ENCODE measurements at regions of chr3 and their contacts with region 1.

Region 1: DNA sequence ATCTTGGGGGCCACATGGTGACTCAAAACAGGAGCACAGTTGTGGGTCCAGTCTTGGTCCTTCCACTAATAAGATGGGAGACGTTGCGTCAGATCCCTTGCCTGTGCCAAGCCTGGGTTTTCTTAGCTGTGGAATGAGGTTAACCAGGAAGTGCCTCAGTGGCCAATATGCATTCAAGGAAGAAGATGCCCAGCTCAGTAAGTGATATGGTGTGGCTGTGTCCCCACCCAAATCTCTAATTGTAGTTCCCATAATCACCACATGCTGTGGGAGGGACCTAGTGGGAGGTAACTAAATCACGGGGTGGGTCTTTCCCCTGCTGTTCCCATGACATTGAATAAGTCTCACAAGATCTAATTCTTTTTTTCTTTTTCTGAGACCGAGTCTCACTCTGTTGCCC is 6.4 kb downstream of the ALG1L2 start:
- DNase-seq: no peak
- H3K4me3 Mint-ChIP-seq: no peak overlapping the region
- H3K27ac Mint-ChIP-seq: no peak overlapping the region
- H3K4me1 Mint-ChIP-seq: no peaks in the 10 kb centered on the region
- H3K27me3 Mint-ChIP-seq: no peaks in the 10 kb centered on the region
- CTCF ChIP-seq: no peak

Region 2: GRCh38 chr3:130048726-130049125 is 39.3 kb before region 1 on chr3:
- CTCF ChIA-PET with region 1: no interaction called
- intact Hi-C with region 1: loop called (anchors 1 kb)
- DNase-seq: no peak
- H3K4me3 Mint-ChIP-seq: no peak overlapping the region
- H3K27ac Mint-ChIP-seq: no peak overlapping the region
- H3K4me1 Mint-ChIP-seq: no peaks in the 10 kb centered on the region
- H3K27me3 Mint-ChIP-seq: peaks cover 12% of the 10 kb centered on the region
- CTCF ChIP-seq: no peak

Measured in Calu3 (cell line).